K562 (cell line): ENCODE measurements at regions of chr9 and their contacts with region 1.

Region 1: GRCh38 chr9:112333639-112334431 is 416 bp upstream of the PTBP3 start:
- DNase-seq: peak; percentile 96 to 98 (median 97)
- ATAC-seq: peak; percentile 79
- H3K4me3 ChIP-seq: peak overlapping the region; percentile 90
- H3K27ac ChIP-seq: peak overlapping the region; percentile 96
- H3K4me1 ChIP-seq: peaks cover 2 to 7% of the 10 kb centered on the region in 2 experiments; a peak in 3 of 5 replicates
- H3K27me3 ChIP-seq: no peaks in the 10 kb centered on the region
- CTCF ChIP-seq: peak; percentile 54 to 74 (median 57); a peak in 5 of 6 replicates
- EP300 ChIP-seq: 0 out of 2 replicates have a peak, but pooled peaks have one; percentile 3
- POLR2A ChIP-seq: no peak; the same call in none of the 2 replicates
- RAD21 ChIP-seq: peak; percentile 37 to 47

Region 2: DNA sequence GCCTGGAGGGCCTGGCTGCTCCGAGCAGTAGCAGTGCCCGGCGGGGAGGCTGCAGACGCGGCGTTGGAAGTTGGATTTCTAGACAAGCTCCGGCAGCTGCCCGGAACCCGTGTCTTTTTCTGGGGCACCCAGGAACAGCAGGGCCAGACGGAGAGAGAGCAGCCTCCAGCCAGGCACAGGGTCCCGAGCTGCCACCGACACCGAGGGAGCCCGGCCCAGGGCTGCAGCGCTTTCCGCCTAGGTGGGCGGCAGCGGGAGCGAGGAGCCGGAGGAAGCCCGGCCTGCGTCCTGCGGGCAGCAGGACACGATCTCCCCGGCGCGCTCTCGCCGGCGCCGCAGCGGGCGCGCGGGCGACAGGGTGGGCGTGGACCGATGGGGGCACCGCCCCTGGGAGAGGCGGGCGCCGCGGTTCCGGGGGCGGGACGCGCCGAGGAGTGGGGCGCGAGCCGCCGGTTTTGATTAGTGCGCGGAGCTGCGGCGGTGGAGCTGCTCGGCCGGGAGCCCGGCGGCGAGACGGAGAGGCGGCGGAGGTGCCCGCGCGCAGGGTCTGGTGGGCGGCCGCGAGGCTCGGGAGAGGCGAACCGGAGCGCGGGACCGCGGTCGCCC is 437.4 kb before region 1 on chr9 and contains the start of gene UGCG:
- CTCF ChIA-PET with region 1: no interaction called
- POLR2A ChIA-PET with region 1: no interaction called
- in situ Hi-C with region 1: no loop called
- intact Hi-C with region 1: loop called (anchors 10 kb)
- DNase-seq: peak; percentile 92 to 94 (median 94)
- ATAC-seq: peak; percentile 83
- H3K4me3 ChIP-seq: peak within 1 kb of the TSS; percentile 78
- H3K27ac ChIP-seq: peak within 1 kb of the TSS; percentile 80
- H3K4me1 ChIP-seq: peaks cover 14 to 21% of the 10 kb centered on the region in 2 experiments; a peak in 4 of 5 replicates
- H3K27me3 ChIP-seq: no peaks in the 10 kb centered on the region
- CTCF ChIP-seq: no peak
- EP300 ChIP-seq: no peak
- POLR2A ChIP-seq: peak; percentile 93
- RAD21 ChIP-seq: no peak; a peak in 1 of 4 replicates
- polyA plus RNA-seq, gene UGCG: 29.2 to 31.9 TPM

Region 3: DNA sequence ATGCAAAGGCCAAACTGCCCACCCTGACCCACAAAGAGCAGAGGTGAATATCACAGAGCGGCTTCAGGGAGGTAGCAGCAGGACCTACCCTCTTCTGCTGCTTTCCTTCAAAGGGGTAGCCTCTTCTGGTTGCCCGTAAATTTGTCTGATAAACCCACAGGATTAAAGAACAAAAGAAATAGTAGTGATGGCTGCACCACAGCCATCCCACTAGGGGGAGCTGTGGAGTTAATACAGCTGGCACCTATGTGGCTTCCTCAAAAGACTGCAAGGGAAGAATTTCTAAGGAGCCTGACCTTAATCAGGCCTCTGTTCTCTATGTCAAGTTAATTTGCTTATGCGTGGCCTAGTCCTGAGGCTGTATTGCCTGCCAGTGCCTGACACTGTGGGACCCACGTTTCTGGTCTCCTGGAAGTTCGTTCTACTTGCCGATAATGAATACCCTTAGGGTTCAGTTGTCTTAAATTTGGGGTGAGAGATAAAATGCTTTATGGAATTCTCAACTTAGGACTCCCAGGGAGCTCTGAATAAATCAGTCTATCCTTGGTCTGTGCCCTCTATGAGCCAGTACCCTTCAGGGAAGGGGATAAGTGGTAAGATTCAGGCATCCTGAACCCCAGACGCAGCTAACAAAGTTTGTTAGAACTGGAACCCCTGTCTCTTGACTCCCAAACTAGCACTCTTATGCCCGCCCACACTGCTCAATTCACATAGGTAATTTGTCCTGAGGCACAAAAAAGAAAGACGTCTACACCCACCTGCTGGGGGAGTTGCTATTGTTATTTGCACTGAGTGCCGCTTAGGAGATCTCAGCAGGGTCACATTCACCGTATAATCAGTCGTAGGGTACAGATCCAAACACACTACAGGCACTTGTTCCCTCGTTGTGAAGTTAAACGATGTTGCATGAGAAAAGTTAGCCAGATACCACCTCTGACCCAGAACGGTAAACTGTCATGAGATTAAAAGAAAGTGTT is 235.8 kb before region 1 on chr9:
- CTCF ChIA-PET with region 1: no interaction called
- POLR2A ChIA-PET with region 1: interaction called, 7 read pairs
- in situ Hi-C with region 1: no loop called
- intact Hi-C with region 1: loop called (anchors 2 kb)
- DNase-seq: peak; percentile 65 to 83 (median 71)
- ATAC-seq: peak; percentile 77
- H3K4me3 ChIP-seq: no peak overlapping the region
- H3K27ac ChIP-seq: no peak overlapping the region
- H3K4me1 ChIP-seq: peaks cover 8 to 33% of the 10 kb centered on the region in 2 experiments; a peak in 4 of 5 replicates
- H3K27me3 ChIP-seq: no peaks in the 10 kb centered on the region
- CTCF ChIP-seq: peak; percentile 80 to 90 (median 82)
- EP300 ChIP-seq: no peak
- POLR2A ChIP-seq: no peak
- RAD21 ChIP-seq: peak; percentile 61 to 76

Region 4: GRCh38 chr9:112224401-112225289 is 109.2 kb before region 1 on chr9:
- CTCF ChIA-PET with region 1: no interaction called
- POLR2A ChIA-PET with region 1: no interaction called
- in situ Hi-C with region 1: no loop called
- intact Hi-C with region 1: loop called (anchors 5 kb)
- DNase-seq: peak in 2 of 4 experiments; percentile 65 to 86
- ATAC-seq: peak; percentile 93
- H3K4me3 ChIP-seq: no peak overlapping the region
- H3K27ac ChIP-seq: peak overlapping the region; percentile 91
- H3K4me1 ChIP-seq: peaks cover 0 to 18% of the 10 kb centered on the region in 2 experiments; a peak in 3 of 5 replicates
- H3K27me3 ChIP-seq: no peaks in the 10 kb centered on the region
- CTCF ChIP-seq: no peak
- EP300 ChIP-seq: peak; percentile 82
- POLR2A ChIP-seq: no peak
- RAD21 ChIP-seq: peak in 1 of 2 experiments; percentile 39; a peak in 1 of 4 replicates

Region 5: GRCh38 chr9:112288029-112288428 is 45.8 kb before region 1 on chr9:
- CTCF ChIA-PET with region 1: no interaction called
- POLR2A ChIA-PET with region 1: no interaction called
- in situ Hi-C with region 1: no loop called
- intact Hi-C with region 1: no loop called
- DNase-seq: no peak
- ATAC-seq: no peak
- H3K4me3 ChIP-seq: no peak overlapping the region
- H3K27ac ChIP-seq: no peak overlapping the region
- H3K4me1 ChIP-seq: no peaks in the 10 kb centered on the region
- H3K27me3 ChIP-seq: no peaks in the 10 kb centered on the region
- CTCF ChIP-seq: no peak
- EP300 ChIP-seq: no peak
- POLR2A ChIP-seq: no peak
- RAD21 ChIP-seq: no peak

Region 6: GRCh38 chr9:112322701-112323377 is 11.0 kb before region 1 on chr9:
- CTCF ChIA-PET with region 1: no interaction called
- POLR2A ChIA-PET with region 1: interaction called, 12 read pairs
- in situ Hi-C with region 1: no loop called
- intact Hi-C with region 1: no loop called
- DNase-seq: peak in 1 of 4 experiments; percentile 17
- ATAC-seq: 0 out of 3 replicates have a peak, but pooled peaks have one; percentile 4
- H3K4me3 ChIP-seq: no peak overlapping the region
- H3K27ac ChIP-seq: no peak overlapping the region
- H3K4me1 ChIP-seq: peaks cover 8 to 11% of the 10 kb centered on the region in 2 experiments; a peak in 3 of 5 replicates
- H3K27me3 ChIP-seq: no peaks in the 10 kb centered on the region
- CTCF ChIP-seq: no peak
- EP300 ChIP-seq: no peak
- POLR2A ChIP-seq: no peak
- RAD21 ChIP-seq: no peak